ENCODE measurements at regions of chr13 and their contacts with region 1.

Region 1: DNA sequence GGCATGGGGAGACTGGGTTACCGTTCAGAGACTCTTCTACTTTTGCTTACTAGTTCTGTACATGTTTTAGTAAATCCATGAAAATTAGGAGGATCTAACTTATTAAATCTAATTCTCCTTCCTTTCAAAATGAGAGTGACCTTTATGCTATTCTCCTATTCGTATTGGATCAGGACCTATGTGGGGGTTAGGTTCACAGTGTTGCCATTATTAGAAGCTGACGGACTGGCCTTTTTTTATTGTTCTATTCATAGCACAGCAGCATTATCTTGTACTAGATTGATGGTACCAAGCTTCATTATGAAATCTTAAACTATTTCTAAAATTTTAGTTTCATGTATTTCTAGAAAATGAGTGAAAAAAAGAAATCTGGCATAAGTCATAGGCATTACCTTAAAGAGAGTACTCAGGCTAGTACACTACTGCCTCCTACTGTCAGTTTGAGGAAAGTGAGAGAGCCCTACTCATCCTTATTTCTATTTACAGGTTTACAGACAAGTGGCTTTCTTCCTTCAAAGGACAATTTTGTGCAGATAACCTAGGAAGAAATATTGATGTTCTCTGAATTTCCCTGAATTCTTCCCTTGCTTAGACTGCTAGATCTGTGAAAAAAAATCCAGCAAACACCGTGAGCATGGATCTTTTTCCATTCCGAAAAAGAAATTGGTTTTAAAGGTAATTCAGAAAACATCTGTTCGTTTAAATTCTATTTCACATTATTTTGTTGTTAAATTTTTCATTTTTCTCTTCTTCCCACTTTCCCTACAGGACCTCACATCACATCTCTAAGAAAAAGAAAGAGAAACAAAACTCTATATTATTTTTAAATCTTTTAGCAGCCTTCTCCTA is 485.5 kb downstream of the DIAPH3 start:
- DNase-seq: peak; percentile 5
- H3K4me3 Mint-ChIP-seq: no peak overlapping the region
- H3K27ac Mint-ChIP-seq: no peak overlapping the region
- H3K4me1 Mint-ChIP-seq: peaks cover under 1% of the 10 kb centered on the region
- H3K27me3 Mint-ChIP-seq: no peaks in the 10 kb centered on the region

Region 2: DNA sequence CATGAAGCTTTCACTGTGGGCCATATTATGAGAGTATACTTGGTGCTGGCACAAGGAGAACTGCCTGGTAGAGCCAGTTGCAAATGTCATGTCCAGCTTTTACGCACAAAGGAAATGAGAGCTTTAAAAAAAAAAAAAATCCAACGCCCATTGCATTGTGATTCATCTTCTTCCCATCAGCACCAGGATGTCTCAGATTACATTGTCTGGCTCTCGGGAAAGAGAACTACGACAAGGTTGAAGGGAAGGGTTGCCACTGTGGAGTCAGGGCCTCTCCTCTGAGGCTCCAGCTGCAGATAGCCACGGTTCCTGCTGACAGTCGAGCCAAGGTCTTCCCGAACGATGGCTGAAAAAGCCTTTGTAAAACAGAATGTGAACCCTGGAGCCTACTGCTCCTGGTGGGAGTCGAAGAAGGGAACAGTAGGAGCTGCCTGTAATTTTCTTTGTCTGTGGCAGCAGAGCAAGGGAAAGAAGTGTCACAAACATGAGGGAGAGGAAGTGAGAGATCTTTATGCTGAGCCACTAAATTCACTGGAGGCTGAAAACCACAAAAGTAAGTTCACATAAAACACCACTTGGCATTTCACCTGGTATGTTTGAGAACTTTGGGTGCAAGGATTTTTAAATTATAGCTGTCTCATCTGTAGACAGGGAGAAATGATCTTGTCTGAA is 219.1 kb before region 1 on chr13:
- CTCF ChIA-PET with region 1: no interaction called
- intact Hi-C with region 1: loop called (anchors 10 kb)
- DNase-seq: no peak
- H3K4me3 Mint-ChIP-seq: no peak overlapping the region
- H3K27ac Mint-ChIP-seq: no peak overlapping the region
- H3K4me1 Mint-ChIP-seq: peaks cover 6% of the 10 kb centered on the region
- H3K27me3 Mint-ChIP-seq: peaks cover 8% of the 10 kb centered on the region

Region 3: GRCh38 chr13:59641817-59642216 is 36.4 kb before region 1 on chr13:
- CTCF ChIA-PET with region 1: no interaction called
- intact Hi-C with region 1: no loop called
- DNase-seq: no peak
- H3K4me3 Mint-ChIP-seq: no peak overlapping the region
- H3K27ac Mint-ChIP-seq: no peak overlapping the region
- H3K4me1 Mint-ChIP-seq: no peaks in the 10 kb centered on the region
- H3K27me3 Mint-ChIP-seq: peaks cover 2% of the 10 kb centered on the region

Region 4: DNA sequence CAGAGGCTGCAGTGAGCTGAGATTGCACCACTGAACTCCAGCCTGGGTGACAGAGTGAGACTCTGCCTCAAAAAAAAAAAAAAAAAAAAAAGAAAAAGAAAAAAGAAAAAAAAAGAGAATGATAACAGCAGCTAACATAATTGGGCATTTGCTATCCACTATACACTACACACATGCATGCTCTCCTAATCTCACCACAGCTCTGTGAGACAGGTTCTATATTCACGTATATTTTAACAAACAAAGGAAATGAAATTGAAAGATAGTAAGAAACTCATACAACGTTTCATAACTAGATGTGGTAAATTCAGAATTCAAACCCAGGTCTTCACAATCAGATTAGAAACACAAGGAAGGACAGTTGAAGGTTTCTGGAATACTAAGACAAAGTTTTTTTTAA is 219.9 kb after region 1 on chr13:
- CTCF ChIA-PET with region 1: no interaction called
- intact Hi-C with region 1: no loop called
- DNase-seq: no peak
- H3K4me3 Mint-ChIP-seq: no peak overlapping the region
- H3K27ac Mint-ChIP-seq: no peak overlapping the region
- H3K4me1 Mint-ChIP-seq: no peaks in the 10 kb centered on the region
- H3K27me3 Mint-ChIP-seq: no peaks in the 10 kb centered on the region

Region 5: GRCh38 chr13:60226507-60226906 is 548.3 kb after region 1 on chr13:
- CTCF ChIA-PET with region 1: no interaction called
- intact Hi-C with region 1: loop called (anchors 5 kb)
- DNase-seq: peak; percentile 21
- H3K4me3 Mint-ChIP-seq: no peak overlapping the region
- H3K27ac Mint-ChIP-seq: no peak overlapping the region
- H3K4me1 Mint-ChIP-seq: no peaks in the 10 kb centered on the region
- H3K27me3 Mint-ChIP-seq: peaks cover 6% of the 10 kb centered on the region

Region 6: DNA sequence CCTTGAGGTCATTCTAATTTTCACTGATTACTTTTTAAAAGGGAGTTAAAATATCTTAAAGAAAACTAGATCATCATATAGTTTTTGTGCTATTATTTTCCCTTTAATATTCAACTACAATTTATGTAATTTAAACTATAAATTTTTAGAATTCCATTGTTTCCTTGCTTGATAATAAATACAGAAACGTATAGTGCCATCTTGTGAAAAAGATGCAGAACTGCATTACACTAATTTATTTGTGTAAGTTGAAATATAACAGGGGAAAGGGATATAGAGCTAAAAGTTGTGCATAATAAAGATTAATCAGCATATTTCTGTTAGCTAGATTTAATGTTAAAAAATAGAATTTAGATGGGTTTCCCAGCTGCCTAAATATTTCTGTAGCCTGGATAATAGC is 657.3 kb after region 1 on chr13:
- CTCF ChIA-PET with region 1: interaction called, 4 read pairs
- intact Hi-C with region 1: loop called (anchors 1 kb)
- DNase-seq: no peak
- H3K4me3 Mint-ChIP-seq: no peak overlapping the region
- H3K27ac Mint-ChIP-seq: no peak overlapping the region
- H3K4me1 Mint-ChIP-seq: no peaks in the 10 kb centered on the region
- H3K27me3 Mint-ChIP-seq: no peaks in the 10 kb centered on the region

Region 7: DNA sequence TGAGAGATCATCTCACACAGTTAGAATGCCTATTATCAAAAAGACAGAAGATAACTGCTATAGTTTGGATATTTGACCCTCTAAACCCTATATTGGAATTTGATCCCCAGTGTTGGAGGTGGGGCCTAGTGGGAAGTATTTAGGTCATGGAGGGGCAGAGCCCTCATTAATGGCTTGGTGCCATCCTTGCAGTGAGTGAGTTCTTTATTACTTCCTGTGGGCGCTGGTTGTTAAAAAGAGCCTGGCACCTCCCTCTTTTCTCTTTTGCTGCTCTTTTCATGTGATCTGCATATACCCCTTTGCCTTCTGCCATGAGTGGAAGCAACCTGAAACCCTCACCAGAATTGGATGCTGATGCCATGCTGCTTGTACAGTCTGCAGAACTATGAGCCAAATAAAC is 785.6 kb after region 1 on chr13:
- CTCF ChIA-PET with region 1: no interaction called
- intact Hi-C with region 1: no loop called
- DNase-seq: no peak
- H3K4me3 Mint-ChIP-seq: no peak overlapping the region
- H3K27ac Mint-ChIP-seq: no peak overlapping the region
- H3K4me1 Mint-ChIP-seq: peaks cover 1% of the 10 kb centered on the region
- H3K27me3 Mint-ChIP-seq: no peaks in the 10 kb centered on the region

Measured in activated naive CD4-positive, alpha-beta T cell treated with anti-CD3 and anti-CD28 coated beads for 36 hours (primary cell).